ENCODE measurements at regions of chr15 and their contacts with region 1.

Region 1: DNA sequence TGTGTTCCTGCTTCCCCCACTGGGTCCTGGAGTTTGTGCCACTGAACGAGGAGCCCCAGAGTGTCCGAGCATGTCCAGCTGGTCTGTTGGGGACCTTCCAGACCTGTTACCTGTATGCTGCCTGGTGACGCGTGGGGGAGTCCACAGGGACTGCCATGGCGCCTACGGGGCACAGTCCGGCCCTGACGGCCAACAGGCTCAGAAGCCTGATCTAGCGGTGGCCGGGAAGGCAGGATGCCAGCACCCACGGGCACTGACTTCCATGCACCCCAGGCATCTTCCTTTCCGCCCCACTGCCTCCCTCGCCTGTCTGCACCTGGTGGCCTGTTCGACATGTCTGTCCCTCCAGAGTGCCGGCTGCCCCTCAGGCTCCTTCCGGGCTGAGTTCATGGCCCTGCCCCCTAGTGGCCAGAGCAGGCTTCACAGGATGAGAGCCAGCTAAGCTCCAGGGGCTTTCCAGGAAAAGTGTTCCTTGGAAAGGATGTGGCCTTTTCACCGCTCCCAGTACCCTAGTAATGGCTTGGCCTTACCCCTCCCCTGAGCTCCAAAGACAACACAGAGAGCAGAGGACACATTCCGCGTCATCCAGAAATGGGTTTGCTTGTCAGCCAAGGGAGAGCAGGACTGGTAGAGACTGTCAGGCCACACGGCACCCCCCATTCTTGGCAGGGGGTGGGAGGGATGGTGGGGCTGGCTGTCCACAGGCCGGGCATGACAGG is 35.7 kb downstream of the NGRN start:
- DNase-seq: peak; percentile 92
- ATAC-seq: peak; percentile 91
- H3K4me3 Mint-ChIP-seq: no peak overlapping the region
- H3K27ac Mint-ChIP-seq: no peak overlapping the region
- H3K4me1 Mint-ChIP-seq: peaks cover 14% of the 10 kb centered on the region
- H3K27me3 Mint-ChIP-seq: no peaks in the 10 kb centered on the region; the same call in 1 of the 2 replicates
- CTCF ChIP-seq: peak; percentile 98

Region 2: DNA sequence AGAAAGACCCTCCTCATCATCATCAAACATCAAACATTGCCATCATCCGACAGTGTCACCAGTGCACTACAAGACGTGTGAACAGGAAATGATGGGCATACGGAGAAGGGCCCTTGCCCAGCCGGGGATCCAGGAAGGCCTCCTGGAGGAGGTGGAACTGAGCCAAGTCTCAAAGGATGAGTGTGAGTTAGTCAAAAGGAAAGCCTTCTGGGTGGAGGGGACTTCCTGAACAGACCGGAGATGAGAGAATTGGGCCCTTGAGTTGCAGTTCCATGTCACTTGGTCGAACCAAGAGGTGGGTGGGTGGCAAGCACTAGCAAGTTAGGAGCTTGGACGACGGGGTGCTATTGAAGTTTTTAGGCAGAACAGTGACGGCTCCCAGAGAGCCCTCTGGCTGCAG is 91.6 kb before region 1 on chr15:
- CTCF ChIA-PET with region 1: no interaction called
- POLR2A ChIA-PET with region 1: no interaction called
- DNase-seq: no peak
- ATAC-seq: no peak
- H3K4me3 Mint-ChIP-seq: no peak overlapping the region
- H3K27ac Mint-ChIP-seq: no peak overlapping the region
- H3K4me1 Mint-ChIP-seq: peaks cover 2% of the 10 kb centered on the region; the same call in 1 of the 2 replicates
- H3K27me3 Mint-ChIP-seq: no peaks in the 10 kb centered on the region
- CTCF ChIP-seq: no peak

Region 3: DNA sequence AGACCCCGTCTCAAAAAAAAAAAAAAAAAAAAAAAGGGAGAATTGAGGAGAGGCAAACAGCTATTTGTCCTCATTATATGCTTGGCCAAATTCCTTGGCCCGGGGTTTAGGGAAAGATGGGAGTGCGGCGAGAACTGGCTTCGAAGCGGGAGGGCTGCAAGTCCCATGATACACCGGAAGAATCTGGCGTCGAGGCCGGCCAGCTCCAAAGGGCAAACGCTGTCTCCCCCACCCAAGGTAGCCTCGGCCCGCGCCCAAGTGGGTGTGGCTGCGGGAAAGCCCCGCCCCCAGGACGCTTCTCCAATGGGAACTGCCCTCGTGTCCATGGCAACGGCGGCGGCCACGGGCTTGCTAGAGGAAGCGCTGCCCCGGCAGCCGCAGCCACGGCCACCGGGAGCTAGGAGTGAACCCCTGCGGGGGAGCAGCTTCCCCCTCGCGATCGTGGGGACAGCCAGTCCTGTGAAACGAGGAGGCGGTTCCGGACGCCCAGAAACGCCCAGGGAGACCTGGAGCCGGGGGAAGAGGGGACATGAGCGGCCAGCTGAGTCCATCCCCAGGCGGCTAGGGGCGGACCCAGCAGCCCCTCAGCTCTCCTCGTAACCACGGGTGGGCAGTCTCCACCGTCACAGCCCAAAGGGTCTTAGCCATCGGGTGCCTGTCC is 51.8 kb before region 1 on chr15 and contains the start of gene TTLL13:
- CTCF ChIA-PET with region 1: interaction called, 10 read pairs
- POLR2A ChIA-PET with region 1: no interaction called
- DNase-seq: peak; percentile 82
- ATAC-seq: peak; percentile 95
- H3K4me3 Mint-ChIP-seq: peak within 1 kb of the TSS; percentile 72
- H3K27ac Mint-ChIP-seq: no peak within 1 kb of the TSS; the same call in 1 of the 2 replicates
- H3K4me1 Mint-ChIP-seq: peaks cover 8% of the 10 kb centered on the region; the same call in 1 of the 2 replicates
- H3K27me3 Mint-ChIP-seq: peaks cover 16% of the 10 kb centered on the region
- CTCF ChIP-seq: no peak
- total RNA-seq, gene TTLL13: 0.18 to 0.76 TPM (median 0.48 TPM) in 3 replicates

Region 4: GRCh38 chr15:90286678-90287077 is 14.5 kb before region 1 on chr15:
- CTCF ChIA-PET with region 1: interaction called, 30 read pairs
- POLR2A ChIA-PET with region 1: no interaction called
- DNase-seq: no peak
- ATAC-seq: peak; percentile 64
- H3K4me3 Mint-ChIP-seq: no peak overlapping the region
- H3K27ac Mint-ChIP-seq: no peak overlapping the region
- H3K4me1 Mint-ChIP-seq: peaks cover 15% of the 10 kb centered on the region
- H3K27me3 Mint-ChIP-seq: no peaks in the 10 kb centered on the region
- CTCF ChIP-seq: no peak

Region 5: GRCh38 chr15:90343302-90343790 is 42.2 kb after region 1 on chr15:
- CTCF ChIA-PET with region 1: no interaction called
- POLR2A ChIA-PET with region 1: no interaction called
- DNase-seq: no peak
- ATAC-seq: no peak
- H3K4me3 Mint-ChIP-seq: no peak overlapping the region
- H3K27ac Mint-ChIP-seq: no peak overlapping the region
- H3K4me1 Mint-ChIP-seq: no peaks in the 10 kb centered on the region
- H3K27me3 Mint-ChIP-seq: no peaks in the 10 kb centered on the region
- CTCF ChIP-seq: no peak